Prostate gland (tissue), 2 donors: ENCODE measurements at regions of chr4 and their contacts with region 1.

Region 1: DNA sequence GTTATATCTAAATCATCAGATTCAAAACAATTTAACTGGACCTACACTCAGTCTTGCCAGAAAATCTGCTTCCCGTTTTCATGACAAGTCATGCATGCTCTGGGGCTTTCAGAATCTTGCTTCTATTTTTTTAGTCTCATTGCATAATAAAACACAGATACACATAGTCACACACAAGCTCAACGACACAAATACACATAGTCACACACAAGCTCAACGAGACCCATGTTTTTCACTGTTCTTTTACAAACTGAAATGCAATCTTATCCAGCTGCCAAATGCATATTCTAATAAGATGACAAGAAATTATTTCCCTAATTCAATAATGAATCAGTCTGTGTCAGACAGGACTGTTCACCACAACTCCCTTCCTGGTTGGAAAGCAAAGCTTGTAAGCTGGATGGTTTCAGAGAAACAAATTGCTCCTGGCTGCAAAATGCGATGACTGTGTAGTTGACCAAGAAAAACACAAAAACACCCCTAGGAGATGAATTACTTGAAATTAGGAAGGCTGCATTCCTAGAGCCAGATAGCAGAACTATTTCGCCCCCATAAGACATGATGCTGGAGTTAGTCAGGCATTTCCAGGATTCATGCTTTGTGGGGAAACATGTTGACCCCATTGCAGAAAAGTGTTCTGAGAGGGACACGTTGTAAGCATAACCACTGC is 208.7 kb downstream of the CHIC2 start:
- DNase-seq: no peak
- H3K4me3 ChIP-seq: no peak overlapping the region
- H3K27ac ChIP-seq: no peak overlapping the region
- H3K4me1 ChIP-seq: no peaks in the 10 kb centered on the region
- H3K27me3 ChIP-seq: no peaks in the 10 kb centered on the region
- CTCF ChIP-seq: no peak
- POLR2A ChIP-seq: no peak

Region 2: DNA sequence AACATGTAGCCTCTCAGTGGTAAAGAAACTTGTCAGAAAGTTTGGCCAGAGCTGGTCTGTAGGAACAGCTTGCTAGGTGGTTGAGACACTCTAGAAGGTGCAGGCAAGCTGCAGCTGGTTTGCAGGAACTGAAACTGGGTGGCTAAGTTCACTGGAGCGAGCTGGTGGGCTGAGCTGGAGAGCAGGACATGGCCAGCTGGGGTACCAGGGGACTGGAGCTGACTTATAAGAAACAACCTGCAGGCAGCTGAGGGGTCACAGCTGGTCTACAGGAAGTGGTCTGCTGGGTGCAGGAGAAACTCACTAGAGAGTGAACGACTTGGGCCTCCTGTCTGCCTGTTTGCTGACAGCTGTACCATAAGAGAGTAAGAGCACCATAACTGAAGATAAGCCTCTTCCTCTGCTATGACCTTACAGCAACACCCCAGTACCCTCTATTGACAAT is 107.4 kb before region 1 on chr4:
- intact Hi-C with region 1: no loop called
- DNase-seq: no peak
- H3K4me3 ChIP-seq: no peak overlapping the region
- H3K27ac ChIP-seq: no peak overlapping the region
- H3K4me1 ChIP-seq: no peaks in the 10 kb centered on the region
- H3K27me3 ChIP-seq: no peaks in the 10 kb centered on the region
- CTCF ChIP-seq: no peak
- POLR2A ChIP-seq: no peak

Region 3: GRCh38 chr4:53777244-53777984 is 78.3 kb before region 1 on chr4:
- intact Hi-C with region 1: loop called (anchors 10 kb)
- DNase-seq: no peak
- H3K4me3 ChIP-seq: no peak overlapping the region
- H3K27ac ChIP-seq: no peak overlapping the region
- H3K4me1 ChIP-seq: no peaks in the 10 kb centered on the region
- H3K27me3 ChIP-seq: no peaks in the 10 kb centered on the region
- CTCF ChIP-seq: no peak
- POLR2A ChIP-seq: no peak